ENCODE measurements at regions of chr2 and their contacts with region 1.

Region 1: GRCh38 chr2:101151141-101151858 is at the start of gene TBC1D8:
- DNase-seq: peak; percentile 82
- H3K4me3 Mint-ChIP-seq: peak within 1 kb of the TSS; percentile 91
- H3K27ac Mint-ChIP-seq: peak within 1 kb of the TSS; percentile 55
- H3K4me1 Mint-ChIP-seq: peaks cover 54% of the 10 kb centered on the region
- H3K27me3 Mint-ChIP-seq: no peaks in the 10 kb centered on the region
- CTCF ChIP-seq: no peak
- total RNA-seq, gene TBC1D8: 48.1 and 50.9 TPM in 2 replicates

Region 2: GRCh38 chr2:101001691-101002561 is 149.4 kb before region 1 on chr2 and contains the start of gene RPL31:
- CTCF ChIA-PET with region 1: interaction called, 11 read pairs
- POLR2A ChIA-PET with region 1: interaction called, 37 read pairs
- intact Hi-C with region 1: no loop called
- DNase-seq: peak; percentile 98
- H3K4me3 Mint-ChIP-seq: peak within 1 kb of the TSS; percentile 92
- H3K27ac Mint-ChIP-seq: peak within 1 kb of the TSS; percentile 99
- H3K4me1 Mint-ChIP-seq: peaks cover 19% of the 10 kb centered on the region
- H3K27me3 Mint-ChIP-seq: no peaks in the 10 kb centered on the region
- CTCF ChIP-seq: no peak
- total RNA-seq, gene RPL31: 1,648 and 1,732 TPM in 2 replicates

Region 3: DNA sequence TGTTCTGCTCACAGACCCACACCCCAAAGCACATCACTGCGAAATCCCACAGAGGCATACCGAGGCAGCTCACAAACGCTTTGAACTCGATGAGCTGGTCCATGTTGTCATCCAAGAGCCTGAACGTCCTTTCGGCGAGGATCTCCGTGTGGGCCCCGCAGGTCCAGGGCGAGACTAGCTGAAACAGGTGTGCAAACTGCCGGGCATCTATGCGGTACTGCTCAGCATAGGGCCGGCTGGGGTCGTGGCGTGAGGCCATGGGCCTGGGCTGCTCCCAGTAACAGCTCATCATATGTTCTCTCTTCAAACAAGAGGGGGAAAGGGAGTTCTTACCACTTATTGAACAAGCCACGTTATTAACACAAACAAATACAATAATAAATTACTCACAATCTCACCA is 129.1 kb before region 1 on chr2:
- CTCF ChIA-PET with region 1: interaction called, 11 read pairs
- POLR2A ChIA-PET with region 1: interaction called, 4 read pairs
- intact Hi-C with region 1: no loop called
- DNase-seq: no peak
- H3K4me3 Mint-ChIP-seq: no peak overlapping the region
- H3K27ac Mint-ChIP-seq: no peak overlapping the region
- H3K4me1 Mint-ChIP-seq: no peaks in the 10 kb centered on the region
- H3K27me3 Mint-ChIP-seq: no peaks in the 10 kb centered on the region
- CTCF ChIP-seq: no peak

Region 4: GRCh38 chr2:101047075-101047766 is 104.1 kb before region 1 on chr2:
- CTCF ChIA-PET with region 1: interaction called, 56 read pairs
- POLR2A ChIA-PET with region 1: interaction called, 24 read pairs
- intact Hi-C with region 1: no loop called
- DNase-seq: peak; percentile 97
- H3K4me3 Mint-ChIP-seq: no peak overlapping the region
- H3K27ac Mint-ChIP-seq: peak overlapping the region; percentile 91
- H3K4me1 Mint-ChIP-seq: peaks cover 13% of the 10 kb centered on the region
- H3K27me3 Mint-ChIP-seq: no peaks in the 10 kb centered on the region
- CTCF ChIP-seq: no peak

Region 5: DNA sequence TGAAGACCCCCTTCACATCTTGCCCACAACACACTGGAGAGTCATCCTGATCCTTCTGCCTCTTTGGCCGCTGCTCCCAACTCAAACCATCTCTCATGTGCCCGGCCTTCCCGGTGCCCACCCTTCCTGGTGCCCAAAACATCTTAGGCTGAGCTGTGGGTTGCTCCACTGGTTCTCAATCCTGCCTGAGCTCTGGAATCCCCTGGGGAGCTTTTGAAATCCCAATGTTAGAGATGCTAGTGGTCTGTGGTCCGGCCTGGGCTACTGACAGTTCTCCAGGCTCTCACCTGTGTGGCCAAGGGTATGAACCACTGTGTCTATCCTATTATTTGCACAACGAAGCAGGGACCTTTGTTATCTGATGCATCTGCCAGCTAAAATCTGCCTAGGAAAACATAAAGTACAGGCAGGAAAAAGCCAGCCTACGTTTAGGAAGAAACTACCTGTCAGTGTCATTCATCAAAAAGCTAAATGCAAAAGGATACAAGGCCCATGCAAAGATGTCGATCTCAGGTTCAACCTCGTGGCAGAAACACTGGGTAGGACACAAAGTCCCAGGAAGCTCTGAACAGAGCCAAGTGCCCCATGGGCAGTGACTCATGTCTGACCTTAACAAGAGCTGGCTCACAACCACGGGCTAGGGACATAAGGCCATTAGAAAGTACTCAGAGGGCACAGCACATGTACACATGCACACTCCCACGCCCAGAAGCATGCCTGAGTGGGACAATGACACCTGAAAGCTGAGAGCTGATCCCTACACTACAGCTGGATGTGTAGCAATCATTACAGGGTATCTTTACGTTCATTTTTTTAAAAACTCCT is 30.9 kb before region 1 on chr2:
- CTCF ChIA-PET with region 1: interaction called, 40 read pairs
- POLR2A ChIA-PET with region 1: interaction called, 275 read pairs
- intact Hi-C with region 1: loop called (anchors 2 kb)
- DNase-seq: peak; percentile 99
- H3K4me3 Mint-ChIP-seq: peak overlapping the region; percentile 40
- H3K27ac Mint-ChIP-seq: peak overlapping the region; percentile 89
- H3K4me1 Mint-ChIP-seq: peaks cover 52% of the 10 kb centered on the region
- H3K27me3 Mint-ChIP-seq: no peaks in the 10 kb centered on the region
- CTCF ChIP-seq: no peak

Region 6: DNA sequence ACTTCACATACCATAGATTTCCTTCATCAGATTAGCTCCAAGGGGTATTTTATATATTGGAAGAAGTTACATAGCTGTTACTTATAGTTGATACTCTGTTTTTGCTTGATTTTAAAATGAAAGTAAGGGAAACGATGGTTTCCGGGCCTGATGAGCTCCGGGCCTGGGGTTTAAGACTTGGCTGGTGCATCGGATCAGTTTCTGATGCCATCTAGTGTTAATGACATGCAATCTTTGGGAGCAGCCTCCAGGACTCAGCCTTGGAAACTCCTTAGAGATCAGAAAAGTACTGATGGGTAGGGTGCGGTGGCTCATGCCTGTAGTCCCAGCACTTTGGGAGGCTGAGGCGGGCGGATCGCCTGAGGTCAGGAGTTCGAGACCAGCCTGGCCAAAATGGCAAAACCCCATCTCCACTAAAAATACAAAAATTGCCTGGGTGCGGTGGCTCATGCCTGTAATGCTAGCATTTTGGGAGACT is 54.3 kb after region 1 on chr2:
- CTCF ChIA-PET with region 1: interaction called, 107 read pairs
- POLR2A ChIA-PET with region 1: interaction called, 20 read pairs
- intact Hi-C with region 1: loop called (anchors 1 kb)
- DNase-seq: peak; percentile 89
- H3K4me3 Mint-ChIP-seq: peak overlapping the region; percentile 39
- H3K27ac Mint-ChIP-seq: peak overlapping the region; percentile 63
- H3K4me1 Mint-ChIP-seq: no peaks in the 10 kb centered on the region
- H3K27me3 Mint-ChIP-seq: no peaks in the 10 kb centered on the region
- CTCF ChIP-seq: peak; percentile 39

Region 7: GRCh38 chr2:101380376-101380775 is 229.1 kb after region 1 on chr2:
- CTCF ChIA-PET with region 1: no interaction called
- POLR2A ChIA-PET with region 1: no interaction called
- intact Hi-C with region 1: no loop called
- DNase-seq: peak; percentile 94
- H3K4me3 Mint-ChIP-seq: no peak overlapping the region
- H3K27ac Mint-ChIP-seq: no peak overlapping the region
- H3K4me1 Mint-ChIP-seq: peaks cover 9% of the 10 kb centered on the region
- H3K27me3 Mint-ChIP-seq: no peaks in the 10 kb centered on the region
- CTCF ChIP-seq: no peak